A673 (cell line): ENCODE measurements at regions of chr10 and their contacts with region 1.

Region 1: GRCh38 chr10:79068562-79069324 is at the start of gene ZMIZ1:
- DNase-seq: peak; percentile 93
- H3K4me3 ChIP-seq: peak within 1 kb of the TSS; percentile 86
- H3K27ac ChIP-seq: peak within 1 kb of the TSS; percentile 61
- H3K4me1 ChIP-seq: peaks cover 22% of the 10 kb centered on the region
- H3K27me3 ChIP-seq: no peaks in the 10 kb centered on the region
- CTCF ChIP-seq: no peak
- total RNA-seq, gene ZMIZ1: 35.8 and 42.1 TPM in 2 replicates

Region 2: DNA sequence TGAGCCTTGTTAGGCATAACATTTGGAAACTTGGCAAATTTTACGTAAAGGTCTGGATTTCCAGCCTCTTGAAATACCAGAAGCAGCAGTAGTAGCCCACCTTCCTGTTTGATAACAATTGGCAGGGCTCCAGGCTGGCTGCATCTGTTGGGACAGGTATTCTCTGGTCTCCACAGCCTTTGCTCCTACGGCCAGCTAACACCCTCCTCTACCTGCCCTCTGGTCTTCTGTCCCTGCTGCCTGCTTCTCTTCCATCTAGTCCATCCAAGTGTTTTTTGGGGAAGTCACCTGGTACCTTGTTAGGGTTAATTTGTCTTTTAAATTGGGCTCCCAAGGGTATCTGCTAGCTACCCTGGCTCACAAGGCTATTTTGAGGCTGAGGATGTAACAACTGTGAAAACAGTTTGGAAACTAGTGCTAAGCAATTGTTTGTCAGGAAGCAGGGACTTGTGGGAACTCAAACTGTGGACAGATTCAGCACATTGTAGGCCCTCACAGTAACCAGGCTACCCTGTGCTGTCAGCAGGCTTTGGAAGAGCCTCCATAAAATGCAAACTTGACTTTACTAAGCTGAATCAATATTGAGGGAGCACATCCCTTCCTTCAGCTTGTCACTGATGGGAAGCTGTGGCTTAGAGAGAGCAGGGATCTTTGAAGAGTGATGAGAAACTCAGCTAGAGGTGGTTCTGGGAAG is 1026.5 kb before region 1 on chr10:
- CTCF ChIA-PET with region 1: no interaction called
- POLR2A ChIA-PET with region 1: no interaction called
- intact Hi-C with region 1: loop called (anchors 5 kb)
- DNase-seq: no peak
- H3K4me3 ChIP-seq: no peak overlapping the region
- H3K27ac ChIP-seq: peak overlapping the region; percentile 40
- H3K4me1 ChIP-seq: peaks cover 32% of the 10 kb centered on the region
- H3K27me3 ChIP-seq: no peaks in the 10 kb centered on the region
- CTCF ChIP-seq: no peak

Region 3: GRCh38 chr10:78664929-78665553 is 403.7 kb before region 1 on chr10:
- CTCF ChIA-PET with region 1: no interaction called
- POLR2A ChIA-PET with region 1: no interaction called
- intact Hi-C with region 1: loop called (anchors 10 kb)
- DNase-seq: peak; percentile 24
- H3K4me3 ChIP-seq: no peak overlapping the region
- H3K27ac ChIP-seq: no peak overlapping the region
- H3K4me1 ChIP-seq: no peaks in the 10 kb centered on the region
- H3K27me3 ChIP-seq: peaks cover 11% of the 10 kb centered on the region
- CTCF ChIP-seq: peak; percentile 51

Region 4: GRCh38 chr10:78700413-78700812 is 368.3 kb before region 1 on chr10:
- CTCF ChIA-PET with region 1: no interaction called
- POLR2A ChIA-PET with region 1: no interaction called
- intact Hi-C with region 1: no loop called
- DNase-seq: peak; percentile 18
- H3K4me3 ChIP-seq: no peak overlapping the region
- H3K27ac ChIP-seq: no peak overlapping the region
- H3K4me1 ChIP-seq: no peaks in the 10 kb centered on the region
- H3K27me3 ChIP-seq: no peaks in the 10 kb centered on the region
- CTCF ChIP-seq: no peak

Region 5: GRCh38 chr10:78944723-78945312 is 123.9 kb before region 1 on chr10:
- CTCF ChIA-PET with region 1: no interaction called
- POLR2A ChIA-PET with region 1: no interaction called
- intact Hi-C with region 1: no loop called
- DNase-seq: no peak
- H3K4me3 ChIP-seq: no peak overlapping the region
- H3K27ac ChIP-seq: no peak overlapping the region
- H3K4me1 ChIP-seq: no peaks in the 10 kb centered on the region
- H3K27me3 ChIP-seq: no peaks in the 10 kb centered on the region
- CTCF ChIP-seq: no peak

Region 6: GRCh38 chr10:78972947-78973900 is 95.5 kb before region 1 on chr10:
- CTCF ChIA-PET with region 1: interaction called, 3 read pairs
- POLR2A ChIA-PET with region 1: no interaction called
- intact Hi-C with region 1: loop called (anchors 5 kb)
- DNase-seq: peak; percentile 95
- H3K4me3 ChIP-seq: peak overlapping the region; percentile 51
- H3K27ac ChIP-seq: peak overlapping the region; percentile 80
- H3K4me1 ChIP-seq: peaks cover 20% of the 10 kb centered on the region
- H3K27me3 ChIP-seq: no peaks in the 10 kb centered on the region
- CTCF ChIP-seq: no peak

Region 7: DNA sequence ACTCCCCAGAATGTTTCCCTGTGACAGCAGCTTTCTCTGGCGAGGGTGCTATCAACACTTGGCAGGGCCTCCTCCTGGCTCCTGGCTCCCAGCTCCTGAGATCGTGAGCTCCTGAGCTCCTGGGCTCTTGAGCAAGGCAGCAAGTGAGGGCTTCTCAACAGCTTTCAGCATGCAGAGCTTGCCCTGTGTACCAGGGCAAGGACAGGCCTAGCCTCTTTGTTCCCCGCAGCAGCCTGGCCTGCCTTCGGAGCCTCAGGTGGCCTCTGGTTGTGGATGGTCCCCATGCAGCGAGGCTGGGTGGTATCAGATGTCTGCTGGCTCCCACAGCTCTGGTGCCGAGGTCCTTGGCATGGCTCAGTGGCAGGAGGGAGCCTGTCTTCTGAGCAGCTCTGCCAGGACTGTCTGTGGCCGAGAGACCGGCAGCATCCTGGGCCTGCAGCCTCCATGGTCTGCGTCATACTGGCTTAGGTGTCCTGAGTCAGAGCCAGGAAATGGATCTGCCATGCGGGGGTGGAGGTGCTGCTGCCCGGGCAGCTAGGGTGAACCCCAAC is 44.2 kb after region 1 on chr10:
- CTCF ChIA-PET with region 1: interaction called, 3 read pairs
- POLR2A ChIA-PET with region 1: no interaction called
- intact Hi-C with region 1: loop called (anchors 5 kb)
- DNase-seq: no peak
- H3K4me3 ChIP-seq: no peak overlapping the region
- H3K27ac ChIP-seq: peak overlapping the region; percentile 74
- H3K4me1 ChIP-seq: peaks cover 35% of the 10 kb centered on the region
- H3K27me3 ChIP-seq: no peaks in the 10 kb centered on the region
- CTCF ChIP-seq: no peak

Region 8: DNA sequence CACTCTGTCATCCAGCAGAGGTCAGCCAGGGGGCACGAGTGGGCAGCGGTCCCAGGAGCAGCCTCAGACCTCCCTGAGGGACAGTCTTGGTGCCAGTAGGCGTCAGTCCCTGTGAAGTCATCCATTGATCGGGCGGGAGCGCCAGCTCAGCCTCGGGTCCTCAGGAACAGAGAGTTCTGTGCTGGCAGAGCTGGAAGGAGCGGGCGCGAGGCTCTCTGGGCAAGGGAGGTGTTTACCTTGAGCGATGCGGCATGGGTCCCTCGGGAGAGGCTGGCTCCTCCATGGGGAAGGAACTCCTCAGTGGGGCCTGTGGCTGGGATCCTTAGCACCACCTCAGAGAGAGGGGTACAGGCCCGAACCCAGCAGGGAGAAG is 177.5 kb after region 1 on chr10:
- CTCF ChIA-PET with region 1: no interaction called
- POLR2A ChIA-PET with region 1: interaction called, 16 read pairs
- intact Hi-C with region 1: no loop called
- DNase-seq: no peak
- H3K4me3 ChIP-seq: no peak overlapping the region
- H3K27ac ChIP-seq: peak overlapping the region; percentile 37
- H3K4me1 ChIP-seq: peaks cover 41% of the 10 kb centered on the region
- H3K27me3 ChIP-seq: no peaks in the 10 kb centered on the region
- CTCF ChIP-seq: no peak